ENCODE measurements at regions of chr6 and their contacts with region 1.

Region 1: DNA sequence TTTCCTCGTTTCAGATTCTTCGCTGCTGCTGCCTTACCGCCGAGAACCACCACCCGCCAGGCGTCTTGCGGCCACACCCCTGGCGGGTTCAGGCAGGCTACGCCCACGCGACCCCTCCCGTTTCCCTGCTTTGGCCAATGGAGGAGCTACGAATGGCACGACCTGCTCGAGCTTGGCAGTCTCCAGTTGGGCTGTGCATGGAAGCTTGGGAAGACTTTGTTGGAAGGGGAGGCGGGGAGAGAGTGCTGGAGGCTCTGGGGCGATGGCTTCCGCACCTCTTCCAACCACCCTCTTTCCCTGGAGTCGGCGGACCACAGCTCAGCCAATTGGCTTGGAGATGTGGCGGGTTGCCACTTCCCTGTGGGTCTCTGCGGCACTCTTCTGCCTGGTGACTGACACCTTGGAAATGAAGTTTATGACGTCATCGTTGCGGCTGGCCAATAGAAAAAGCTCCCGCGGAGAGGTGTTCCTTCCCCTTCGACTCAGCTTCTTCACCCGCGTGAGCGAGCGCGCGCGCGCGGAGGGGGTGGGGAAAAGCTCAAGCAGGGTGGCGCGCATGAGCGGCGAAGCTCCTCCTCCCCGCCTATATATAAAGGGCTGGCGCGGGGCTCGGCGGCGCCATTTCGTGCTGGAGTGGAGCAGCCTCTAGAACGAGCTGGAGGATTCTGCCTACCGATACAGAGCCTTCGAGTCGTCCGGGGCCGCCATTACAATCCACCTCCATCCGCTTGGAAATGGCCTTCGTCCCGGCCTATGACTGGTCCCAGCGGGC is 3.4 kb downstream of the BRD2 start:
- DNase-seq: peak; percentile 99
- H3K4me3 Mint-ChIP-seq: peak overlapping the region; percentile 96
- H3K27ac Mint-ChIP-seq: peak overlapping the region; percentile 98
- H3K4me1 Mint-ChIP-seq: peaks cover 32% of the 10 kb centered on the region
- H3K27me3 Mint-ChIP-seq: peaks cover 4% of the 10 kb centered on the region

Region 2: GRCh38 chr6:31958741-31959739 is 1012.7 kb before region 1 on chr6 and contains the starts of genes NELFE and SKIC2:
- intact Hi-C with region 1: loop called (anchors 5 kb)
- DNase-seq: peak; percentile 99
- H3K4me3 Mint-ChIP-seq: peak within 1 kb of the TSS; percentile 98
- H3K27ac Mint-ChIP-seq: peak within 1 kb of the TSS; percentile 98
- H3K4me1 Mint-ChIP-seq: peaks cover 46% of the 10 kb centered on the region
- H3K27me3 Mint-ChIP-seq: no peaks in the 10 kb centered on the region
- total RNA-seq, gene NELFE: 92.3 and 97.7 TPM in 2 replicates
- total RNA-seq, gene SKIC2: 85.8 and 101 TPM in 2 replicates

Region 3: GRCh38 chr6:32838114-32838958 is 133.4 kb before region 1 on chr6 and contains the start of gene TAP2:
- intact Hi-C with region 1: loop called (anchors 1 kb)
- DNase-seq: peak; percentile 97
- H3K4me3 Mint-ChIP-seq: peak within 1 kb of the TSS; percentile 79
- H3K27ac Mint-ChIP-seq: peak within 1 kb of the TSS; percentile 89
- H3K4me1 Mint-ChIP-seq: peaks cover 87% of the 10 kb centered on the region
- H3K27me3 Mint-ChIP-seq: no peaks in the 10 kb centered on the region
- total RNA-seq, gene TAP2: 160 and 167 TPM in 2 replicates

Region 4: DNA sequence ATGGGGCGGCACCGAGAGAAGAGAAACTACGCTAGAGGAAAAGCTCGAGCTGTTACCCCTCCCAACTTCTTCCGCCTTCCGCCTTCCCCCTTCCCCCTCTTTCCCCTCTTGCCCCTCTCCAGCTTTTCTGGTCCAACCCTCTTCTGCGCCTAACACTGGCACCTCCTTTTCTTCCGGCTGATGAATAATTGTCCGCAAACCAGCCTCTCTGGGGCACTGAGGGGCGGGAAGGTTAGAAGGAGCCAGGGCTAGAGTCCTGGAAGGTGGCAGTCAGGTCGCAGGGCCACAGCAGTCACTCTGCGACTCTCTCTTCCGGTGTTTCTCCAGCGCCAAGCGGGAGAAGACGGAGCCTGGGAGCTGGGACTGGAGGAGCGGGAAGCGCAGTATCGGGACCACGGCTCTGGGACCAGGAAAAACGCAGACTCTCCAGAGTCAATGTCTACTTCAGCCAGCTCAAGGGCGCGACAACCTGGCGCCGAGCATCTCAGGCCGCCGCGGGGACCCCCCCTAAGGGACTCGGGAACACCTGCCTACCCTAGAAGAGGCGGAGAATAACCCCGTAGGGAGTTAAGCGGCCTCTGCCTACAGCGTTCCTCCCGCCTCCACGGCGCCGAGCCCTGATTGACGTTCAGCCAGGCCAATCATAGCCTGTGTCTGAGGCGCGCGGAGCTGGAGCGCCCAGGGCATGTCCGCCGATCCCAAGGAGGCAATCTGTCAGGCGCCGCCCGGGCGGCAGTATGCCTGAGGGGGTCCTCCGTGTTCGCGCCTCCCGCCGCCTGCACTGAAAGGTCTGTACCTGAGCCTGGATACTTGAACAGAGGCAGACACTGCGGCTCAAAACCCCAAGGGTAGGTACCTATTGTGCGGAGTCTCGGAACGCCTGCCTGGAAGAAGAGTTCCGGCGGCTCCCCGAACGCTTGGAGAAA is 77.4 kb before region 1 on chr6:
- intact Hi-C with region 1: loop called (anchors 1 kb)
- DNase-seq: peak; percentile 95
- H3K4me3 Mint-ChIP-seq: peak overlapping the region; percentile 99
- H3K27ac Mint-ChIP-seq: peak overlapping the region; percentile 92
- H3K4me1 Mint-ChIP-seq: peaks cover 48% of the 10 kb centered on the region
- H3K27me3 Mint-ChIP-seq: peaks cover 12% of the 10 kb centered on the region

Region 5: GRCh38 chr6:32984605-32985389 is 13.0 kb after region 1 on chr6:
- intact Hi-C with region 1: loop called (anchors 1 kb)
- DNase-seq: peak; percentile 78
- H3K4me3 Mint-ChIP-seq: no peak overlapping the region
- H3K27ac Mint-ChIP-seq: peak overlapping the region; percentile 73
- H3K4me1 Mint-ChIP-seq: peaks cover 37% of the 10 kb centered on the region
- H3K27me3 Mint-ChIP-seq: no peaks in the 10 kb centered on the region

Region 6: DNA sequence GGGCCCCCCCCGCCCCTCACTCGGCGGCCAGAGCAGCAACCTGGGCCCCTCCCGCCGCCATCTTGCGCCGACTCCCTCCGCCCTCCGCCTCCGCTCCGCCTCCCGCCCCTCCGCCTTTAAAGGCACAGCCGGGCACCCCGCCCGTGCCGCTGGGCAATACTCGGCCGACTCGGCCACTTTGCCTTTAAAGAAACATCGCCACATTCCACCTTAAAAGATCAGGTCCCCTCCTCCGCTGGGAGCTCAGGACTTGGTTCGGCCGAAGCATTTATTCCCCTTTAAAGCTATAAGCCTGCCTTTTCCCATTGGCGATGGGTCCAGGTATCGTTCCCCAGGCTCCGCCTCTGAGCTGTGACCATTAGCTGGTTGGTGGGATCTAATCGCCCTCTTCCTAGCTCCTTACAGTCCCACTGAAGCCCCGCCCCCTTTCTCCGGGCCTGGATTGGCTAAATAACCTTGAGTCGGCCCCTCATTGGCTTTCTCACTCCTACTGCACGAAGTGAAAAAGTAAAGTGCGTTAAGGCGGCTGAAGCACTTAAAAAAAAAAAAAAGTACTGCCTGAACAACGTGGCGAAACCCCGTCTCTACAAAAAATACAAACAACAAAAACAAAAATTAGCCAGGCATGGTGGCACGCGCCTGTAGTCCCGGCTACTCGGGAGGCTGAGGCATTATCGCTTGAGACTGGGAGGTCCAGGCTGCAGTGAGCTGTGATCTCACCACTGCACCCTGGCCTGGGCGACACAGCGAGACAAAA is 346.1 kb after region 1 on chr6 and contains the start of gene ZBTB22:
- intact Hi-C with region 1: loop called (anchors 1 kb)
- DNase-seq: peak; percentile 92
- H3K4me3 Mint-ChIP-seq: peak within 1 kb of the TSS; percentile 97
- H3K27ac Mint-ChIP-seq: peak within 1 kb of the TSS; percentile 94
- H3K4me1 Mint-ChIP-seq: peaks cover 74% of the 10 kb centered on the region
- H3K27me3 Mint-ChIP-seq: no peaks in the 10 kb centered on the region
- total RNA-seq, gene ZBTB22: 12.5 and 14.7 TPM in 2 replicates

Measured in activated T-helper 1 cell treated with anti-CD3 and anti-CD28 coated beads, Interleukin-12 subunit alpha, Interleukin-12 subunit beta, Interleukin-2, Interleukin-4 antibody, amounts not matched to agents 30 ng/mL and 10 ng/mL and 1 ng/mL, durations not matched to agents 14 hours and 24 hours and 36 hours (primary cell).